Endothelial cell of umbilical vein (primary cell): ENCODE measurements at regions of chr17 and their contacts with region 1.

Region 1: DNA sequence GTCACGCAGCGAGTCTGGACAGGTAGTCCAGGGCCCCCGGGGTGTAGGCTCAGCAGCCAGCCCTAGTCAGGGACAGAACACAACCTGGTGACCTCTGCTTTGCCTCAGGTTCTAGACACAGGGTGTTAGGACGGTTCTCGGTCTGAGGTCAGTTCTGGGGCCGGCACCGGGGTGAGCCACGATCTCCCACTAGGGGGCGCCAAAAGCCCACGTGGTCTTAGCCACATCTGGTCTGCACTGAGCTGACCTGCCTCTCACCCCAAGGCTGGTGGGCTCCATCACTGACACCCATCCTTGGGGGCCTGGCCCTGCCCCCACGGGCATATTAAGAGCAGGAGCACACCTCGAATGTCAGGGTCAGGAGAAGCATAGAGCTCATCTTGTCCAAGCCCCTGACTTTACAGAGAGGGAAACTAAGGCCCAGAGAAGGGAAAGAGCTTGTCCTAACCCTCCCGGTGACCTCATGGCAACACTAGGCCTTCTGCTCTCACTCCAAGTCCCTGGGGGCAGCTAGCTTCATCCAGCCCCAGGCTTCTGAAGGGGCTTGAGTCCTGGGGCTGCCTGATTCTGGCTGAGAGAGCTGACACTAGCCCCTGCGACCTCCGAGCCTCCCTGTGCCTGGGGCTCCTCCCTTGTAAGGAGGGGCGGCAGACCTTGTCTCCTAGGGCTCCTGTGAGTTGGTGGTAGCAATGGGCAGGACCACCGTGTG is 9.0 kb downstream of the SLC5A10 start:
- DNase-seq: peak; percentile 64
- H3K4me3 ChIP-seq: no peak overlapping the region
- H3K27ac ChIP-seq: no peak overlapping the region
- H3K4me1 ChIP-seq: no peaks in the 10 kb centered on the region
- H3K27me3 ChIP-seq: no peaks in the 10 kb centered on the region
- CTCF ChIP-seq: peak; percentile 88 to 95
- POLR2A ChIP-seq: no peak

Region 2: GRCh38 chr17:18889658-18890057 is 71.3 kb before region 1 on chr17:
- CTCF ChIA-PET with region 1: no interaction called
- POLR2A ChIA-PET with region 1: no interaction called
- dilution Hi-C with region 1: no loop called
- intact Hi-C with region 1: no loop called
- DNase-seq: peak; percentile 26
- H3K4me3 ChIP-seq: no peak overlapping the region
- H3K27ac ChIP-seq: no peak overlapping the region
- H3K4me1 ChIP-seq: peaks cover 10% of the 10 kb centered on the region
- H3K27me3 ChIP-seq: no peaks in the 10 kb centered on the region
- CTCF ChIP-seq: no peak
- POLR2A ChIP-seq: no peak

Region 3: GRCh38 chr17:18910881-18911280 is 50.1 kb before region 1 on chr17:
- CTCF ChIA-PET with region 1: no interaction called
- POLR2A ChIA-PET with region 1: no interaction called
- dilution Hi-C with region 1: no loop called
- intact Hi-C with region 1: no loop called
- DNase-seq: no peak
- H3K4me3 ChIP-seq: no peak overlapping the region
- H3K27ac ChIP-seq: no peak overlapping the region
- H3K4me1 ChIP-seq: no peaks in the 10 kb centered on the region
- H3K27me3 ChIP-seq: no peaks in the 10 kb centered on the region
- CTCF ChIP-seq: no peak
- POLR2A ChIP-seq: no peak

Region 4: DNA sequence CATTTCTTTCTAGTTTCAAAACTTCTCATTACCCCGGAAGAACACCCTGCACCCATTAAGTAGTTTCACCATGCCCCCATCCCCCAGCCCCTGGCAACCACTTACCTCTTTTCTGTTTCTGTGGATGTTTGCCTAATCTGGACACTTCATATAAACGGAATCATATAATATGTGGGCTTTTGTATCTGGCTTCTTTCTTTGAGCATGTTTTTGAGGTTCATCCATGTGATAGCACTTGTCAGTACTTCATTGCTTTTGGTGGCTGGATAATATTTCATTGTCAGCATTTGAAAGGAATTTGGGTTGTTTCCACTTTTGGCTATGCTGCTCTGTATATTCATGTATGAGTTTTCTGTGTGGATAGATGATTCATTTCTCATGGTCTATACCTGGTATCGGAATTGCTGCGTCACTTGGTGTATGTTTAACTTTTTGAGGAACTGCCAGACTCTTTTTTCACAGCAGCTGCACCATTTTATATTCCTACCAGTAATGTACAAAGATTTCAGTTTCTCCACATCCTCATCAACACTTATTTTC is 39.0 kb before region 1 on chr17:
- CTCF ChIA-PET with region 1: no interaction called
- POLR2A ChIA-PET with region 1: no interaction called
- dilution Hi-C with region 1: no loop called
- intact Hi-C with region 1: no loop called
- DNase-seq: no peak
- H3K4me3 ChIP-seq: no peak overlapping the region
- H3K27ac ChIP-seq: no peak overlapping the region
- H3K4me1 ChIP-seq: peaks cover 15% of the 10 kb centered on the region
- H3K27me3 ChIP-seq: no peaks in the 10 kb centered on the region
- CTCF ChIP-seq: no peak
- POLR2A ChIP-seq: no peak

Region 5: DNA sequence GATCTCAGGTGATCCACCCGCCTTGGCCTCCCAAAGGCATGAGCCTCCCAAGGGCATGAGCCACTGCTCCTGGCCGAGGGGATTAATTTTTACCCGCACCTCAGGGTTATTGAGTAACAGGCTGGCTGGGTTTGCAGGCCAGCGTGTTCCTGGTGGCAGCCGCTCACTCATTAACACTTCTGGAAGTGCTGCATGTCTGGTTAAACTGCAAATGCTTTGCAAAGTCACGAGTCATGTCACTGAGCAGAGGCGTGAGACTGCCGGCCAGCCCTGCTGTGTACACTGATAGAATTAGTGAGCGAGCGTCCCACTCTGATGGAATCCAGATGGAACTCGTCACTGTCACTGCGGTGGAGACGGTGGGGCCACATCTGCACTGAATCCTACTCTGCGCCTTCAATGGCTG is 10.0 kb before region 1 on chr17:
- CTCF ChIA-PET with region 1: interaction called, 11 read pairs
- POLR2A ChIA-PET with region 1: no interaction called
- dilution Hi-C with region 1: no loop called
- intact Hi-C with region 1: no loop called
- DNase-seq: no peak
- H3K4me3 ChIP-seq: no peak overlapping the region
- H3K27ac ChIP-seq: no peak overlapping the region
- H3K4me1 ChIP-seq: no peaks in the 10 kb centered on the region
- H3K27me3 ChIP-seq: peaks cover 3 to 18% of the 10 kb centered on the region in 2 experiments
- CTCF ChIP-seq: no peak
- POLR2A ChIP-seq: no peak

Region 6: GRCh38 chr17:18981642-18982424 is 20.9 kb after region 1 on chr17:
- CTCF ChIA-PET with region 1: interaction called, 11 read pairs
- POLR2A ChIA-PET with region 1: no interaction called
- dilution Hi-C with region 1: no loop called
- intact Hi-C with region 1: no loop called
- DNase-seq: peak; percentile 46
- H3K4me3 ChIP-seq: no peak overlapping the region
- H3K27ac ChIP-seq: peak overlapping the region; percentile 54
- H3K4me1 ChIP-seq: peaks cover 8% of the 10 kb centered on the region
- H3K27me3 ChIP-seq: no peaks in the 10 kb centered on the region
- CTCF ChIP-seq: no peak
- POLR2A ChIP-seq: no peak

Region 7: DNA sequence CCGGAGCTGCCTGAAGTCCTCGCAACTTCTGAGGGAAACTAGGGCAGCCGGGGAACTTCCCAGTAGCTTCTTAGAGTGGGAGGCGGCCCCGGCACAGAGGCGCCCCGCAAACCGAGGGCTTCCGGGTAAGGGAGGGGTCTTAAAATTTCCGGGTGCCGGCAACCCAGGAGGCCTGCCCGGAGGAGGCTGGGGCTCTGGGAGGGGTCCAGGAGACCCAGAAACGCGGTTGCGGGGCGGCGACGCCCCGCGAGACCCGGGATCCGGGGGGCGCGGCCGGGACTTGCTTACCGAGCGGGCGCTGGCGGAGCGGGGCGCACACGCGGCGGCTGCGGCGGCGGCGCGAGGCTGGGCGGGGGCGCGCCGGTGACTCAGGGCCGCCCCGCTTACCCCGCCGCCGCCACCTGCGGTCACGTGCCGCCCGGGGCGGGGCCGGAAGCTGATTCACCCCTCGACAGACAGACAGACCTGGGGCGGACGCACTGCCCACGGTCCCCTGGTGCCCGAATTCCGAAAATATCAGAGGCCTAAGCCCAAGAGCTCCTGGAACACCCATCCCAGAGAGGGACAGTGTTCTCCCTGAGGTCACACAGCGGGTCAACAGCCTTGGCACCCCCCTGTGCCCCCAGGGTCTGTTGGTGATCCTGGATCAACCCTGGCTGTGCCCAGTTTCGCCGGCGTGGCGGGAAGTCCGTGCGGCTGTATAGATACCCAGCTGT is 43.6 kb after region 1 on chr17 and contains the start of gene FAM83G:
- CTCF ChIA-PET with region 1: interaction called, 35 read pairs
- POLR2A ChIA-PET with region 1: no interaction called
- dilution Hi-C with region 1: no loop called
- intact Hi-C with region 1: loop called (anchors 2 kb)
- DNase-seq: peak; percentile 52
- H3K4me3 ChIP-seq: peak within 1 kb of the TSS; percentile 71 to 74 (median 71)
- H3K27ac ChIP-seq: peak within 1 kb of the TSS; percentile 75
- H3K4me1 ChIP-seq: peaks cover 24% of the 10 kb centered on the region
- H3K27me3 ChIP-seq: no peaks in the 10 kb centered on the region
- CTCF ChIP-seq: no peak
- POLR2A ChIP-seq: no peak
- total RNA-seq, gene FAM83G: 10.9 and 11.1 TPM in 2 replicates

Region 8: GRCh38 chr17:19019036-19019941 is 58.3 kb after region 1 on chr17:
- CTCF ChIA-PET with region 1: interaction called, 22 read pairs
- POLR2A ChIA-PET with region 1: no interaction called
- dilution Hi-C with region 1: no loop called
- intact Hi-C with region 1: no loop called
- DNase-seq: no peak
- H3K4me3 ChIP-seq: no peak overlapping the region
- H3K27ac ChIP-seq: no peak overlapping the region
- H3K4me1 ChIP-seq: no peaks in the 10 kb centered on the region
- H3K27me3 ChIP-seq: no peaks in the 10 kb centered on the region
- CTCF ChIP-seq: no peak
- POLR2A ChIP-seq: peak; percentile 33

Region 9: DNA sequence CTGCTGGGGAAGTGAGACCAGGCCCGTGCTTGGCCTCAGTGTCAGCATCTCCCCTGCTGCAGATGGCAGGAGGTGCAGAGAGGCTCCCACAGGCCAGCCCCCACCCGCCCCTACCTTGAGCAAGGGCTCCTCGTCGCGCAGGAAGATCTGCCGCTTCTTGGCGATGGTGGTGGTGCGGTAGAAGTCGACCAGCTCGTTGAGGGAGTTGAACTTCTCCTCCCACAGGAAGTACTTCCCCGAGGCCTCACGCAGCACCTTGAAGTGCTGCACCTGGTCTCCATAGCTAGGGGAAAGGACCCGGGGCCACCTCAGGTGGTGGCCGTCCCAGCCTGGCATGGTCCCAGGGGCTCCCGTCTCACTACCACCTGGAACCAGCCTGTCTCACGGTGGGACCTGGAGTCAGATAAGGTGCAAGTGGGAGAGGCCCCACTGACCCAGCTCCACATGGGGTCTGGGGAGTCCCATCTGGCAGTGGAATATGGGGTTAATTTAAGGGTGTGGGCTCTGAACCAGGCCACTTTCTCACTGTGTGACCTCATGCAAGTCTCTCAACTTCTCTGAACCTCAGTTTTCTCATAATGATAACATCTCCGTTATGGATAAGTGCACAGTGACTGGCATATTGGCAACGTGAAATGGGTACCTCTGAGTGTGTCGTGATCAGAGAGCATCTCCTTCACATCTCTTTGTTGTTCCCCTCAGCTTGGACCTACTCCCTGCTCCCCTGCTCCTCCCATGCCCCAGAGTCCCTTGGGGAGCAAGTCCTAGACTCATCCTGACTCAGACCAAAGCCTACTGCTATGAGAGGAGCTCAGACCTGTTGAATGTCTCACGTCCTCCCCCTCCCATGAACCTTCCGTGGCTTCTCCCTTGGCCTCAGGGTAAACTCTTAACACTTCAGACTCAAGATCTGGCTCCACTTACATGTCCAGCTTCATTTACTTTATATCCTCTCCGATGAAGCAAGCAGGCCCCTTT is 63.4 kb after region 1 on chr17:
- CTCF ChIA-PET with region 1: interaction called, 22 read pairs
- POLR2A ChIA-PET with region 1: no interaction called
- dilution Hi-C with region 1: no loop called
- intact Hi-C with region 1: no loop called
- DNase-seq: no peak
- H3K4me3 ChIP-seq: no peak overlapping the region
- H3K27ac ChIP-seq: no peak overlapping the region
- H3K4me1 ChIP-seq: no peaks in the 10 kb centered on the region
- H3K27me3 ChIP-seq: no peaks in the 10 kb centered on the region
- CTCF ChIP-seq: no peak
- POLR2A ChIP-seq: no peak